PC-9 (cell line): ENCODE measurements at regions of chrX and their contacts with region 1.

Region 1: DNA sequence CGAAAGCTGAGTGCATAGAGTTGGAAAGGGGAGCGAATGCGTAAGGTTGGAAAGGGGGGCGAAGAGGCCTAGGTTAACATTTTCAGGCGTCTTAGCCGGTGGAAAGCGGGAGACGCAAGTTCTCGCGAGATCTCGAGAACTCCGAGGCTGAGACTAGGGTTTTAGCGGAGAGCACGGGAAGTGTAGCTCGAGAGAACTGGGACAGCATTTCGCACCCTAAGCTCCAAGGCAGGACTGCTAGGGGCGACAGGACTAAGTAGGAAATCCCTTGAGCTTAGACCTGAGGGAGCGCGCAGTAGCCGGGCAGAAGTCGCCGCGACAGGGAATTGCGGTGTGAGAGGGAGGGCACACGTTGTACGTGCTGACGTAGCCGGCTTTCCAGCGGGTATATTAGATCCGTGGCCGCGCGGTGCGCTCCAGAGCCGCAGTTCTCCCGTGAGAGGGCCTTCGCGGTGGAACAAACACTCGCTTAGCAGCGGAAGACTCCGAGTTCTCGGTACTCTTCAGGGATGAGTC is at the start of gene DDX3X:
- DNase-seq: peak; percentile 63 to 69
- H3K4me3 ChIP-seq: peak within 1 kb of the TSS; percentile 69
- H3K27ac ChIP-seq: peak within 1 kb of the TSS; percentile 99
- H3K4me1 ChIP-seq: peaks cover 4% of the 10 kb centered on the region; the same call in 1 of the 2 replicates
- H3K27me3 ChIP-seq: no peaks in the 10 kb centered on the region
- CTCF ChIP-seq: no peak
- total RNA-seq, gene DDX3X: 130 and 158 TPM in 2 replicates

Region 2: DNA sequence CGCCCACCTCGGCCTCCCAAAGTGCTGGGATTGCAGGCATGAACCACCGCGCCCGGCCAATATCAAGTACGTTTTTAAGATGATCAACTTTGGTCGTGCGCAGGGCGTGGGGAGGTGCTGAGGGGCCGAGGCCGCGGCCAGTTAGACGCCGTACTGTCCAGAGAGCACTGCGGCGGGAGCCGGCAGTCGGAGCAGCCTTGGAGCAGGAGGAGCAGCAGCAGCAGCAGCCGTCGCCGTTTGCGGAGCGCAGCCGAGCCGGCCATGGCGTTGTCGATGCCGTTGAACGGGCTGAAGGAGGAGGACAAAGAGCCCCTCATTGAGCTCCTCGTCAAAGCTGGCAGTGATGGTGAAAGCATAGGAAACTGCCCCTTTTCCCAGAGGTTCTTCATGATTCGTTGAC is 257.1 kb before region 1 on chrX:
- CTCF ChIA-PET with region 1: no interaction called
- POLR2A ChIA-PET with region 1: interaction called, 11 read pairs
- intact Hi-C with region 1: no loop called
- DNase-seq: no peak
- H3K4me3 ChIP-seq: no peak overlapping the region
- H3K27ac ChIP-seq: no peak overlapping the region
- H3K4me1 ChIP-seq: no peaks in the 10 kb centered on the region
- H3K27me3 ChIP-seq: no peaks in the 10 kb centered on the region
- CTCF ChIP-seq: no peak

Region 3: GRCh38 chrX:41084044-41084892 is 249.5 kb before region 1 on chrX:
- CTCF ChIA-PET with region 1: no interaction called
- POLR2A ChIA-PET with region 1: interaction called, 12 read pairs
- intact Hi-C with region 1: no loop called
- DNase-seq: peak; percentile 76 to 89
- H3K4me3 ChIP-seq: peak overlapping the region; percentile 62
- H3K27ac ChIP-seq: peak overlapping the region; percentile 92
- H3K4me1 ChIP-seq: 0 out of 2 replicates have a peak, but pooled peaks cover 6% of the 10 kb centered on the region
- H3K27me3 ChIP-seq: no peaks in the 10 kb centered on the region
- CTCF ChIP-seq: no peak

Region 4: DNA sequence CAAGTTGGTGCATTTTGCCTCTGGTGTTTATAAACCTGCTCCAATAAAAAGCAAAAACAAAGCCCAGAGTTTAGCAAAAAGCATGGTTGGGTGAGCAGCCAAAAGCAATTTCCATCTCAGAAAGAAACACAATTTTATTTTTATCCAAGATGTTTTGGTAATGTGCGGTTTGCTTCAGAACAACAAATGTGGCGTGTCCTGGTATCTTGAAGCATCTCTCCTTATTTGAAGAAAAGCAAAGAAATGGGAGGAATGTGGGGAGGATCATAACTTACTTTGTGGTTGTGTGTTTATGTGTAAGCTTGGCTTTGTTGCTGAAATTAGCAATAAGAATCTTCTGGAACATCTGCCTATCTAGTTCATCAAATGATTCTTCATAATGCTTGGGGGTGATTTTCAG is 88.2 kb before region 1 on chrX:
- CTCF ChIA-PET with region 1: no interaction called
- POLR2A ChIA-PET with region 1: no interaction called
- intact Hi-C with region 1: no loop called
- DNase-seq: no peak
- H3K4me3 ChIP-seq: no peak overlapping the region
- H3K27ac ChIP-seq: no peak overlapping the region
- H3K4me1 ChIP-seq: no peaks in the 10 kb centered on the region
- H3K27me3 ChIP-seq: no peaks in the 10 kb centered on the region
- CTCF ChIP-seq: no peak

Region 5: GRCh38 chrX:41275661-41276609 is 57.9 kb before region 1 on chrX:
- CTCF ChIA-PET with region 1: no interaction called
- POLR2A ChIA-PET with region 1: no interaction called
- intact Hi-C with region 1: loop called (anchors 5 kb)
- DNase-seq: peak in 1 of 2 experiments; percentile 41
- H3K4me3 ChIP-seq: peak overlapping the region; percentile 50; the same call in 1 of the 2 replicates
- H3K27ac ChIP-seq: no peak overlapping the region
- H3K4me1 ChIP-seq: no peaks in the 10 kb centered on the region
- H3K27me3 ChIP-seq: no peaks in the 10 kb centered on the region
- CTCF ChIP-seq: peak; percentile 44

Region 6: GRCh38 chrX:41300758-41301437 is 32.9 kb before region 1 on chrX:
- CTCF ChIA-PET with region 1: interaction called, 5 read pairs
- POLR2A ChIA-PET with region 1: interaction called, 16 read pairs
- intact Hi-C with region 1: loop called (anchors 2 kb)
- DNase-seq: peak in 1 of 2 experiments; percentile 38
- H3K4me3 ChIP-seq: no peak overlapping the region
- H3K27ac ChIP-seq: peak overlapping the region; percentile 64
- H3K4me1 ChIP-seq: peaks cover 19% of the 10 kb centered on the region; the same call in 1 of the 2 replicates
- H3K27me3 ChIP-seq: no peaks in the 10 kb centered on the region
- CTCF ChIP-seq: no peak

Region 7: DNA sequence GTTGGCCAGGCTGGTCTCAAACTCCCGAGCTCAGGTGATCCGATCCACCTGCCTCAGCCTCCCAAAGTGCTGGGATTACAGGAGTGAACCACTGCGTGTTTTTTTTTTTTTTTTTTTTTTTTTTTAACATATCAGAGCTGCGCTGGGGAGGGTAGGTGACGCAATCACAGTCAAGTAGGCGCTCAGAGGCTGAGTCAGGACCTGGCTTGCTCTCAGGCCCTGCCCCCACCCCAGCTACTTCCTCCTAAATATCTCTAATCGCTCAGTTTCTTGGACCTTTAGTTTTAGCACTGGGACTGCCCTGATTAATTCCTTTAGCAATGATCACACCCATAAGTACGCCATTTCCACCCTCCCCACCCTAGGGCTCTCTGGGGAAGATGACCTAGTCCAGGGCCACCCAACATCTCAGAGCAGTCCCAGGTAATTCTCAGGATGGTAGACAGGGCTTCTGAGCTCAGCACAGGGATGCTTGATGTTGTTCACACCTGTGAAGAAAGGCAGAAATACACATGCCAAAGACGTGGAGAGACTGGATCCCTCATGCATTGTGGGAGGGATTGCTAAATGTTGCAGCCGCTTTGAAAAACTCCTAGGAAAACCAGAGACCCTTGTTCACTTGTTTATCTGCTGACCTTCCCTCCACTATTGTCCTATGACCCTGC is 50.4 kb after region 1 on chrX:
- CTCF ChIA-PET with region 1: no interaction called
- POLR2A ChIA-PET with region 1: no interaction called
- intact Hi-C with region 1: loop called (anchors 5 kb)
- DNase-seq: peak; percentile 43 to 72
- H3K4me3 ChIP-seq: no peak overlapping the region
- H3K27ac ChIP-seq: peak overlapping the region; percentile 88
- H3K4me1 ChIP-seq: peaks cover 18% of the 10 kb centered on the region
- H3K27me3 ChIP-seq: no peaks in the 10 kb centered on the region
- CTCF ChIP-seq: no peak

Region 8: DNA sequence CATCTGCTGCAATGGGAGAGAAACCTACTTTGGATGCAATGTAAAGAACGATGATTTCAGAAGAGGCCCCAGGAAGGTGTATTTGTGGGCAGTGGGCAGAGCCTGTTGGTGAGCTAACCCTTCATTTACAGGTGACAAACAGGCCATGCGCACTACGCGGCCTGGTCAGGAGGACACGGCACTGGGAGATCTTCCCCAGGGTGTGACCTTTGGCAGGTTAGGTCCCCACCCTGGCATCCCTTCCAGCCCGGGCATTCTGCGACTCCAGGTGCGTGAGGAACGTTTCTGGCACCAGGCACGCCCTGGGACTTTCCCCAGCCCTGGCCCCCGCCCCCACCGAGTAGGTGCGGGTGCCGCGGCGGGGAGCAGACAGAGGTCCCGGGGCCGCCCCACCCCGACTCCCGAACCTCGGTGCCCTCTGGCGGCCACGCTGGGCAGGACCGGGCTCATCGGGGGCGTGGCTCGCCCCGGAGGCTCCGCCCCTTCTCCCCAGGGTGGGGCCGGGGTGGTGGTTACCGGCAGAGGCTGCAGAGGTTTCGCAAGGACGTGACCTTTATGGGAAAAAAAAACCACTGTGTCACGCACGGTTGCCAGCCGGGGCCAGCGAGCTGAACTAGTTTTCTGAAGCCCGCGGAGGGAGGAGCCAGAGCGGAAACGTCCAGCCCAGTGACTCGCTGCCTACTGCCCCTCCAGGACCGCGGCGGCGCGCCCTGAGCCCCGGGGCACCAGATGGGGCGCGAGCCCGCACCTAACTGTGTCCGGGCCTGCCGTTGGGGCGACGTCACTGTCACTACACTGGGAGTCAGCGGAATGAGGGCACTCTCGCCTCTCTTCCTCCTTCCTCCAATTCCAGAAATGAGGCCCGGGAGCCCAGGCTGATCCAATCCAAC is 108.4 kb after region 1 on chrX:
- CTCF ChIA-PET with region 1: interaction called, 7 read pairs
- POLR2A ChIA-PET with region 1: no interaction called
- intact Hi-C with region 1: loop called (anchors 1 kb)
- DNase-seq: peak; percentile 80 to 87
- H3K4me3 ChIP-seq: peak overlapping the region; percentile 36; the same call in 1 of the 2 replicates
- H3K27ac ChIP-seq: peak overlapping the region; percentile 65
- H3K4me1 ChIP-seq: no peaks in the 10 kb centered on the region
- H3K27me3 ChIP-seq: no peaks in the 10 kb centered on the region
- CTCF ChIP-seq: peak; percentile 62